ENCODE measurements at regions of chr7 and their contacts with region 1.

Region 1: DNA sequence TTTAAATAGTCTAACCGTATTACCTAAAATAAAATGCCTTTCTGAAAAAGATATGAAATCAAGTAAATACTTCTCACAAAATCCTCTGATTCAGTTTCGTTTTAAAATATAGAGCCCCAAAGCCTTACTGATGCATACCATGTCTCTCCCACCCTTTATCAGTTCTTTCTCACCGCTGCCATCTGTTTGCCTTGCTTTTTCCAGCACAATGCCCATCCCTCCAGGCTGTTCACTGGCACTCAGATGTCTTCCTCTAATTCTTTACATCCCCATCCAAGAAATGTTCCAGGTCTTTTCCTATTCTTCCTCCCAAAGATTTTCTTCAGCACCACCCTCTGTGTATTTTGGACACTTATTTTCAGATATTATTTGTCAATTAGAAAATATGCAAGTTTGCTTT is 116.5 kb upstream of the LRRN3 start:
- DNase-seq: no peak
- ATAC-seq: no peak

Region 2: DNA sequence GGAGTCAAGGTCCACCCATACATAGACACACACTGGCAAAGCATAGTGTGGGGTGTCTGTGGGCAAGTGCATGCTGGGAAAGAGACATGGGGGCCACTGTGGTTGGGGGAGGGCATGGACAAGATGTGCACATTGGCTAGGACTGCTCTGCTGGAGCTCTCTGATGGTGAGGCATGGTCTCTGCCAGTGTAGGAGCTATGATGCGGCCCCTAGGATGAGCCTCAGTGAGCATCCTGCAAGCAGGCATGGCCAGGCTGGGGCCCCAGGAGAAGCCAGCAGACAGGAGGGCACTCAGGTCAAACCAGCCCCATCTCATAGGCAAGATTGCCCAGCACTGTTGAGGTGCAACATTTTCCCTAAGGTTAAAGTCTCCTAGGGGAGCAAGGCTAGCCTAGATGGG is 1915.4 kb before region 1 on chr7:
- intact Hi-C with region 1: no loop called
- DNase-seq: no peak
- ATAC-seq: no peak

Region 3: DNA sequence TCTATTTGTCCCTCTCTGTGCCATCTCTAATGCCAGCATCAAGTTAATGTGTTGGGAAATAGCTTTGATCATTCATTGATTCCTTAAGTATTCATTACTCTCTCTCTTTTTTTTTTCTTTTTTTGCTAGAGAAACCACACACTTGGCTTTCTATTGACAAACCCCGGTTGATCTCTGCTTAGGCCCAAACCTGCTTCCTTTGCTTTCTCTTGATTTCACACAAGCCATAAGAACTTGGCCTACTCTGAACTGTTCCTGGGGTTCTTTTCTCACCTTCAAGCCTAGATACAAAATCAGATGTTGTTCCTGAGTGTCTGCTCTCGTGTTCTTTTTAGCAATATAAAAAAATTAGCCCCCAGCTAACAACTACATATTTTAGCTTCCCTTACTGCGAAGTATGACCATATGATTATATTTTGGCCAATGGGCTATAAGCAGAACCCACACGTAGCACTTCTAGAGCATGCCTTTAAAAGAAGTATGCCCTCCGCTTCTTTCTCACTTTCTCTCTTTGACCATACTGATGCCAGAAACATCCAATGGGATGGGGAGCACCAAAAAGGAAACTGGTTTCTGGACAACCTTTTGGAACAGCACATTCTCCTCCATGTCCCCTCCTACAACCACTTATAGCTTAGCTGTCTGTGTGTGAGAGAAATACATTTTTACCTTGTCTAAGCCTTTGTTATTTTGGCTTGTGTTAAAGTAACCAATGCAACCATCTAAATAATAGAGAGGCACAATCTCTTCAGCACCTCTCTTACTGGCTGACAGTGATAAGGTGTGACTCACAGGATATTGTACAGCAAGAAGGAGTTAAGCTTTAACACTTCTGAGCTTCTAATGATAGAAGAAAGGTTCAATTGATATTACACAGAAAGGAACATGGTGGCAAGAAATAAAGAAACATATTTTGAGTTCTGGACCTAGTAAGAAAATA is 19.9 kb after region 1 on chr7:
- intact Hi-C with region 1: loop called (anchors 1 kb)
- DNase-seq: no peak
- ATAC-seq: no peak

Measured in sciatic nerve (tissue), 2 donors.